PC-9 (cell line): ENCODE measurements at regions of chr10 and their contacts with region 1.

Region 1: DNA sequence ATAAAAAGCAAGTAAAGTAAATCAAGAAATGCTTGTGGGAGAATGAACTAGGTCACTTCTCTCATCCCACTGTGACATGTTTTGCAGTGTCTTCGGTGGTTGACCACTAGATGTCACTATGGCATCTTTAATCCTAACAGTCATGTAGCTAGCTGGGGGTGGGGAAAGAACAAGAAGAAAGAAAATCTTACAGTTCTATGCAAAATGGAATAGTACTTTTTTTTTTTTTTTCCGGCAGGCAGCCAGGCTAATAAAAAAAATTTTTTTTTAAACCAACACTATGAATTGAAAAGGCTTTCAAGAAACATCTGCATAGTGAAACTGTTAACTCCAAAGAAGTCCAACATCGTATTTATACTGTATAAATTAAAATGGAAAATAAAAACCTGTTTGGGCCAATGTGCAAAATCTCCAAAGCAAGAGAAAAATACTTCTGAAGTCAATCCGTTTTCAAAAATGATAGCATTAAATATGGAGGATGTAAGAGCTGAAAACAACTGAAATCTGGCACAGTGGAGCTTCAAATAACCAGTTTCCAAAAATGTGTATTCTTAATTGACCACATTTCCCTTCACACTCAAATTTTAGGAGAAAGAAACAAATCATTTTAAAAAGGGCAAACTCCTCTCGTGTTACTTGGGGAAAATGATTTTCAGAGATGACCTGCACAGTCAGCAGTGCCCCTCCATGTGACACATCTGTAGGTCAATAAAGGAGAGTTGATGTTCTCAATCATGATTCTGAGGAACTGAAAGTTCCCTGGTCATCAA is 38.5 kb downstream of the CDK1 start:
- DNase-seq: peak; percentile 33 to 59
- H3K4me3 ChIP-seq: no peak overlapping the region
- H3K27ac ChIP-seq: no peak overlapping the region
- H3K4me1 ChIP-seq: peaks cover 5% of the 10 kb centered on the region; the same call in 1 of the 2 replicates
- H3K27me3 ChIP-seq: no peaks in the 10 kb centered on the region
- CTCF ChIP-seq: peak; percentile 95

Region 2: DNA sequence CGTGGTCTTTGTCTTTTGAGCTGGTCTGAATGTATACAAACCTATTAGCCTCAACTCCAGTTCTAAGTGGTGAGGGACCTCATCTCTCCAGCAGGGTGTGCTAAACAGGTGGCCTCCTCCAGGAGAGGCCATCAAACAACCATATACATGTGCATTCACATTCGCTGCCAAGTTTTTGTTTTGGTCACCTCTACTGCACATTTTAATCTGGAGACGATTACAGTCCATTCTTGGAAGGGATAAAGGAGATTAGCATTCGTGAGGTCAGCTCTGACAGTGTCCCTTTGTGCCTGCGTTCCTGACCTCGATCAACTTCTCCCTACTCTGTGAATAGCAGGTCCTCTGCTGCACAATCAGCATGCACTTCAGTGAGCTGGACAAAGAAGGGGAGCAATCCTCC is 66.4 kb after region 1 on chr10:
- CTCF ChIA-PET with region 1: no interaction called
- POLR2A ChIA-PET with region 1: no interaction called
- intact Hi-C with region 1: no loop called
- DNase-seq: no peak
- H3K4me3 ChIP-seq: no peak overlapping the region
- H3K27ac ChIP-seq: no peak overlapping the region
- H3K4me1 ChIP-seq: peaks cover 6% of the 10 kb centered on the region
- H3K27me3 ChIP-seq: no peaks in the 10 kb centered on the region
- CTCF ChIP-seq: peak; percentile 54

Region 3: GRCh38 chr10:60910543-60910942 is 93.7 kb after region 1 on chr10:
- CTCF ChIA-PET with region 1: no interaction called
- POLR2A ChIA-PET with region 1: no interaction called
- intact Hi-C with region 1: no loop called
- DNase-seq: no peak
- H3K4me3 ChIP-seq: no peak overlapping the region
- H3K27ac ChIP-seq: no peak overlapping the region
- H3K4me1 ChIP-seq: no peaks in the 10 kb centered on the region; the same call in 1 of the 2 replicates
- H3K27me3 ChIP-seq: no peaks in the 10 kb centered on the region
- CTCF ChIP-seq: no peak

Region 4: GRCh38 chr10:60950300-60950699 is 133.5 kb after region 1 on chr10:
- CTCF ChIA-PET with region 1: interaction called, 15 read pairs
- POLR2A ChIA-PET with region 1: no interaction called
- intact Hi-C with region 1: no loop called
- DNase-seq: no peak
- H3K4me3 ChIP-seq: no peak overlapping the region
- H3K27ac ChIP-seq: no peak overlapping the region
- H3K4me1 ChIP-seq: peaks cover 15% of the 10 kb centered on the region
- H3K27me3 ChIP-seq: no peaks in the 10 kb centered on the region
- CTCF ChIP-seq: no peak

Region 5: DNA sequence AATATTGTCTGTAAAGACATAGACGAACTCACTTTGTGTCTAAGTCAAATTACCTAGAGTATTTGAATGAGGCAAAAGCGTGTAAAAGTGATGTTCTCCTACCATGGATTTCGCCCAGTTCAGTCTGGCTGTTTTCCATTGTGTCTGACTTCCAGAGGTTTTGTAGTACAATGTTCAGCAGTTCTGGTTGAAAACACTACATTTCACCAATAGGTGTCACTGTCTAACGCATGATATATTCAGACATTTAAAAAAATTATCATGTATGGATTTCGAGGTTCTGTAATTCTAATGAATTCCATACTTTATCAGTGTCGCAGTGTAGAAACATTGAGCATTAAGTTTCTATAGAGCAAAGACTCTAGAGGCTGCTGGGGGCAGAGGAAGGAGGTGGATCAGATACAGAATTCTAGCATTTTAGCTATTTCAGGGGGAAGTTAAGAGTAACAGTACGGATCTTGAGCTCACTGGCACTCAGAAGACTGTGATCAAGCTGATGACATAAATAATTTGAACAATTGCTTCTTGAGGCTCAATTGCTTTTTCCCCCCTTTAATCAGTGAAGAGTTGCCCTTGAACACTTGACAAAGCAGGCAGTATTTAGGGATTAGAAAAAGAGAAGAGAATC is 324.1 kb after region 1 on chr10:
- CTCF ChIA-PET with region 1: no interaction called
- POLR2A ChIA-PET with region 1: no interaction called
- intact Hi-C with region 1: loop called (anchors 10 kb)
- DNase-seq: peak in 1 of 2 experiments; percentile 42
- H3K4me3 ChIP-seq: no peak overlapping the region
- H3K27ac ChIP-seq: no peak overlapping the region
- H3K4me1 ChIP-seq: no peaks in the 10 kb centered on the region
- H3K27me3 ChIP-seq: no peaks in the 10 kb centered on the region
- CTCF ChIP-seq: peak; percentile 76

Region 6: GRCh38 chr10:61284222-61284890 is 467.5 kb after region 1 on chr10:
- CTCF ChIA-PET with region 1: no interaction called
- POLR2A ChIA-PET with region 1: no interaction called
- intact Hi-C with region 1: loop called (anchors 1 kb)
- DNase-seq: peak in 1 of 2 experiments; percentile 74
- H3K4me3 ChIP-seq: 0 out of 2 replicates have a peak overlapping the region, but pooled peaks have one; percentile 14
- H3K27ac ChIP-seq: 0 out of 2 replicates have a peak overlapping the region, but pooled peaks have one; percentile 9
- H3K4me1 ChIP-seq: peaks cover 6% of the 10 kb centered on the region; the same call in 1 of the 2 replicates
- H3K27me3 ChIP-seq: no peaks in the 10 kb centered on the region
- CTCF ChIP-seq: peak; percentile 91

Region 7: DNA sequence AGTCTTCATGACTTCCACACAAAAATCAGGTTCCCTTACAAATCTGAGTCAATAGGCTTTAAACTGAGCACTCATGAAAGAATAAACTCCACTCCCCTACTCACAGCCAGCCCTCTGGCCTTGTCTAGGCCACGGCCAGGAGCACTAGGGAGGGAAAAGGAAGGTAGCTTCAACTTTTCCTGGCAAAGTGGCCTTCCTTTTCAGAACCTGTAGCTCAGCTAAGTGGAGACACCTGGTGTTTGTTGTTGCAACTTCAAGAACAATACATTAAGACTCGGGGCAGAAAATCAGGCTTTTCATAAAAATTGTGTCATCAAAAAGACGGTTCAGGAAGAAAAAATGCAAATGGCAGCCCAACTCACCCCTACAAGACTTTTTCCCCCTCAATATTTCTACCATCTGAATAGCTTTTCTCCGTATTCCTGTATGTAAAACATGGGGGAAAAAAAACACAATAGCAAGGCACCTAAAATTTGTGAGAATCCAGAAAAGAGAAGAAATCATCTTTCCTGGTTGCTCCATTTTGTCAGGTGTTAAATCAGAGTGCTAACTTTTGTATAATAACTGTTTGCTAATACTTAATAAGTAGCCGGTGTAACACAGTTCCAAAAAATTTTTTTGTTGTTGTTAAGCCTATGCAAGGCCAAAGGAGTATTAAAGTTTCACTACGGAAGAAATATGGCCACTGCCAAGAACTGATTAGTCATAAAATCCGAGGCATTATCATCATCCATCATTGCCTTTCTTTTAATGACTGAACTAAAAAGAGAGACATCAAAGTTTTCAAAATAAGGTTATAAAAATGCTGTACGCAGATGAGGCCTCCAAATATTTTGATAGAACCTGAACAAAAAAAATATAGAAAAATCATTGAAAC is 1018.5 kb after region 1 on chr10:
- CTCF ChIA-PET with region 1: no interaction called
- POLR2A ChIA-PET with region 1: no interaction called
- intact Hi-C with region 1: loop called (anchors 1 kb)
- DNase-seq: no peak
- H3K4me3 ChIP-seq: no peak overlapping the region
- H3K27ac ChIP-seq: peak overlapping the region; percentile 70
- H3K4me1 ChIP-seq: peaks cover 69% of the 10 kb centered on the region
- H3K27me3 ChIP-seq: no peaks in the 10 kb centered on the region
- CTCF ChIP-seq: peak; percentile 59; the same call in 1 of the 2 replicates

Region 8: GRCh38 chr10:62816331-62817120 is 1999.7 kb after region 1 on chr10 and contains the start of gene EGR2:
- CTCF ChIA-PET with region 1: no interaction called
- POLR2A ChIA-PET with region 1: no interaction called
- intact Hi-C with region 1: loop called (anchors 2 kb)
- DNase-seq: peak; percentile 90 to 93
- H3K4me3 ChIP-seq: peak within 1 kb of the TSS; percentile 94
- H3K27ac ChIP-seq: peak within 1 kb of the TSS; percentile 28
- H3K4me1 ChIP-seq: peaks cover 4% of the 10 kb centered on the region; the same call in 1 of the 2 replicates
- H3K27me3 ChIP-seq: no peaks in the 10 kb centered on the region
- CTCF ChIP-seq: no peak
- total RNA-seq, gene EGR2: 0.24 and 0.53 TPM in 2 replicates